CD14-positive monocyte (primary cell): ENCODE measurements at regions of chr22 and their contacts with region 1.

Region 1: DNA sequence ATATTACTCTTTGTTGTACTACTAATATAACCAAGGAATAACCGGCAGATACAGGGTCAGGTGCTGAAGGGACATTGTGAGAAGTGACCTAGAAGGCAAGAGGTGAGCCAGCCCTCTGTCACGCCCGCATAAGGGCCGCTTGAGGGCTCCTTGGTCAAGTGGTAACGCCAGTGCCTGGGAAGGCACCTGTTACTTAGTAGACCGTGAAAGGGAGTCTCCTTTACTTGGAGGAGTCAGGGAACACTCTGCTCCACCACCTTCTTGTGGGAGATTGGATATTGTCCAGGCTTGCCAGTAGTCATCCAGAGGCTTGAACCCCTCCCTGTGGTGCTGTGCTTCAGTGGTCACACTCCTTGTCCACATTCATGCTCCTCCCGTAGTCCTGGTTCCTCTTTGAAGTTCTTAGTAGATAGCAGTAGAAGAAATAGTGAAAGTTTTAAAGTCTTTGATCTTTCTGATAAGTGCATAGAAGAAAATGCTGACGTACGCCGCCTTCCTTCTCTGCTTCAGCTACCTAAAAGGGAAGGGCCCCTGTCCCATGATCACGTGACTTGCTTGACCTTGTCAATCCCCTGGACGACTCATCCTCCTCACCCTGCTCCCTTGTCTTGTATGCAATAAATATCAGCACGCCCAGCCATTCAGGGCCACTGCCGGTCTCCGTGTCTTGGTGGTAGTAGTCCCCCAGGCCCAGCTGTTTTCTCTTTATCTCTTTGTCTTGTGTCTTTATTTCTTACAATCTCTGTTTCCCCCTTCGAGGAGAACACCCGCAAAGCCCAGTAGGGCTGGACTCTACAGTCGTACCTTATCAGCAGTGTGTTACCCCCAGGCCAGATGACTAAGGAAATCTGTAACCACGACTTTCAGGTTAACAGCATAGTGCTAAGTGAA is 6.1 kb downstream of the NUP50 start:
- DNase-seq: peak; percentile 29 to 60 (median 42)
- H3K4me3 ChIP-seq: no peak overlapping the region
- H3K4me3 Mint-ChIP-seq: no peak overlapping the region
- H3K27ac ChIP-seq: peak overlapping the region in 1 of 2 donors; percentile 69
- H3K27ac Mint-ChIP-seq: peak overlapping the region; percentile 25 to 90 (median 65)
- H3K4me1 ChIP-seq: peaks cover 36 to 48% of the 10 kb centered on the region in 2 donors
- H3K4me1 Mint-ChIP-seq: peaks cover 47% of the 10 kb centered on the region
- H3K27me3 ChIP-seq: no peaks in the 10 kb centered on the region
- H3K27me3 Mint-ChIP-seq: peaks cover 0 to 2% (median 0%) of the 10 kb centered on the region in 3 donors
- CTCF ChIP-seq: no peak

Region 2: GRCh38 chr22:45101515-45102227 is 68.2 kb before region 1 on chr22:
- intact Hi-C with region 1: loop called (anchors 2 to 10 kb)
- DNase-seq: peak; percentile 73 to 86 (median 81)
- H3K4me3 ChIP-seq: no peak overlapping the region
- H3K4me3 Mint-ChIP-seq: peak overlapping the region in 1 of 2 donors; percentile 35
- H3K27ac ChIP-seq: no peak overlapping the region
- H3K27ac Mint-ChIP-seq: peak overlapping the region in 2 of 7 donors; percentile 46 to 60
- H3K4me1 ChIP-seq: peaks cover 22 to 29% of the 10 kb centered on the region in 2 donors
- H3K4me1 Mint-ChIP-seq: peaks cover 26% of the 10 kb centered on the region
- H3K27me3 ChIP-seq: peaks cover 0 to 5% of the 10 kb centered on the region in 2 donors
- H3K27me3 Mint-ChIP-seq: peaks cover 13 to 18% (median 16%) of the 10 kb centered on the region in 3 donors
- CTCF ChIP-seq: peak; percentile 61

Region 3: DNA sequence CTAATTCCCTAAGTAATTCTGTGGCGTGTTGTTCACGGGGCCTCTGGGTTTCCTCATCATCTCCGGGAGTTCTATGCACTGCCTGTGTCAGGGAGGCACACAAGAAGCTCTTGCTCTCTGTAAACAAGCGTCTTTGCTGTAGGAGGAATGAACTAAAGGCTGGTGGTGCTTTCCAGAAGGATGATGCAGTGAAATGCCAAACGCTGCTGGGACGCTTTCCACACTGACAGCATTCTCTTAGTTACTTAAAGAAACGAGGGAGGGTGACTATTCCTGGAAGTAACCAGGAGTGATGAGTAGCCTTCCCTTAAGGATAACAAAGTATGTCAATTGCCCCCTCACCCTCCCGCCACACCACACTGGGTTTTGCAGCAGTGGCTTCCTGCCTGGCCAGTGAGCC is 44.6 kb before region 1 on chr22:
- intact Hi-C with region 1: no loop called
- DNase-seq: no peak
- H3K4me3 ChIP-seq: no peak overlapping the region
- H3K4me3 Mint-ChIP-seq: no peak overlapping the region
- H3K27ac ChIP-seq: no peak overlapping the region
- H3K27ac Mint-ChIP-seq: no peak overlapping the region
- H3K4me1 ChIP-seq: peaks cover 19 to 25% of the 10 kb centered on the region in 2 donors
- H3K4me1 Mint-ChIP-seq: peaks cover 28% of the 10 kb centered on the region
- H3K27me3 ChIP-seq: no peaks in the 10 kb centered on the region
- H3K27me3 Mint-ChIP-seq: peaks cover 2 to 5% (median 3%) of the 10 kb centered on the region in 3 donors
- CTCF ChIP-seq: no peak

Region 4: DNA sequence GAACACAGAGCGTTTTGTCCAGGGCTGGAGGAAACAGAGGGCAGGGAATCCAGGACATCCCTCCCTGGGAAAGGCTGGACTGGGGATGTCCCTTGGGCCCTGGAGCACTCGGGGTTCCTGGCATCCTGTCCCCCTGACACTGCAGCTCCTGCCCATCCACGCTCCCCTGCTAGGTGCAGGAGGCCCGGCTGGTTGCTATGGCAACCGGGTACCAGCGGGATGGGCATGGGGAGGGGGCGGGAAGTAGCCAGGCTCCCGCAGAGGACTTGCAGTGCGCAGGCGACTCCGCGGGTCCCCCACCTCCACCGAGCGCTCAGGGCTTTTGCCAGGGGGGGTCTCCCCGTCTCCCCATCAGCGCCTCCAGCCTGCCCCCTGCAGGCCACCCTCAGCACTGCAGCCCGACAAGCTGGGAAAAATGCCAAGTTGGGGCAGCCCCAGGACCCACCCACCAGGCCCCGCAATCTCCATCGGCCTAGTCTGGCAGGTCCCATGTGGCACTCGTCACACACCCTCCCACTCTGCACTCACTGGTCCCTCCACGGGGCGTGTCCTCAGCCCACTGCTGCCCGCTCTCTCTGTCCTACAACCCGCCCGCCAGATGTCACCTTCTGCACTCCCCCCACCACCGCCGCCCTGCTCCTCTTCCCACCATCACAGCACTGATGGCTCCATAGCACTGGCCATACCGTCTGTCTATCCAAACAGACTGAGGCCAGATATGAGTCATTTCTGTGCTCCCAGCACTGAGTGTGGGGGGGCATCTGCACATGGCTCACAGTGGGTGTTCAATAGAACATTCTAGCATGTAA is 39.4 kb after region 1 on chr22:
- intact Hi-C with region 1: loop called in 1 of 2 experiments (anchors 5 kb)
- DNase-seq: peak in 1 of 3 donors; percentile 30
- H3K4me3 ChIP-seq: no peak overlapping the region
- H3K4me3 Mint-ChIP-seq: no peak overlapping the region
- H3K27ac ChIP-seq: peak overlapping the region in 1 of 2 donors; percentile 98
- H3K27ac Mint-ChIP-seq: peak overlapping the region; percentile 14 to 90 (median 79)
- H3K4me1 ChIP-seq: peaks cover 26 to 27% of the 10 kb centered on the region in 2 donors
- H3K4me1 Mint-ChIP-seq: peaks cover 29% of the 10 kb centered on the region
- H3K27me3 ChIP-seq: no peaks in the 10 kb centered on the region
- H3K27me3 Mint-ChIP-seq: peaks cover 0 to 2% (median 1%) of the 10 kb centered on the region in 3 donors
- CTCF ChIP-seq: peak; percentile 79